ENCODE measurements at regions of chr1 and their contacts with region 1.

Region 1: GRCh38 chr1:84143796-84144565 is at the start of gene PRKACB:
- DNase-seq: peak in 8 of 35 experiments; percentile 11 to 75 (median 14)
- ATAC-seq: peak; percentile 88 to 97 (median 93)
- H3K4me3 ChIP-seq: peak within 1 kb of the TSS; percentile 57 to 69
- H3K4me3 Mint-ChIP-seq: peak within 1 kb of the TSS; percentile 93 to 97 (median 97)
- H3K27ac ChIP-seq: peak within 1 kb of the TSS; percentile 69
- H3K27ac Mint-ChIP-seq: peak within 1 kb of the TSS; percentile 99
- H3K4me1 ChIP-seq: peaks cover 6 to 41% of the 10 kb centered on the region in 2 experiments
- H3K4me1 Mint-ChIP-seq: peaks cover 33 to 53% (median 36%) of the 10 kb centered on the region in 3 donors
- H3K27me3 ChIP-seq: no peaks in the 10 kb centered on the region
- H3K27me3 Mint-ChIP-seq: no peaks in the 10 kb centered on the region
- total RNA-seq, gene PRKACB: 101 to 119 (median 109) TPM

Region 2: GRCh38 chr1:83909687-83910086 is 234.3 kb before region 1 on chr1:
- CTCF ChIA-PET with region 1: no interaction called
- POLR2A ChIA-PET with region 1: interaction called in 1 of 2 experiments, 11 read pairs
- DNase-seq: no peak
- ATAC-seq: no peak
- H3K4me3 ChIP-seq: no peak overlapping the region
- H3K4me3 Mint-ChIP-seq: no peak overlapping the region
- H3K27ac ChIP-seq: no peak overlapping the region
- H3K27ac Mint-ChIP-seq: no peak overlapping the region
- H3K4me1 ChIP-seq: no peaks in the 10 kb centered on the region
- H3K4me1 Mint-ChIP-seq: no peaks in the 10 kb centered on the region
- H3K27me3 ChIP-seq: peaks cover 0 to 4% of the 10 kb centered on the region in 2 experiments
- H3K27me3 Mint-ChIP-seq: peaks cover 21 to 23% of the 10 kb centered on the region in 2 donors

Region 3: DNA sequence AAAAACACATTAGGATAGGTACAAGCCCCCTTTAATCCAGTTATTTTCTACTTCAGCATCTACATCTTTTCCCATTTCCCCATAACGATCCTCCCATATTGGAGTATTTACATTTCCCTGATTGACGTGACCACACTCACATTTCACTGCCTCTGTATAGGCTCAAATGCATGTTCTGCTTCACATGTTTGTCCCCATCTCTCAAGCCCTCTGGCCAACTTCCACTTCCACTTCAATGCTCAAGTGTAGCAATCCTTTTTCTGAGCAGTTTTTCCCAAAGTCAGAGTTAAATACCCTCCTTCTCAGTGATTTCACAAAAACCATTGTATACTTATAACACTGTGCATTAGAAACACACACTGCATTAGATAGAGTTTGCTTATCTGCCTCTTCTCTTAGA is 83.2 kb before region 1 on chr1:
- CTCF ChIA-PET with region 1: no interaction called
- POLR2A ChIA-PET with region 1: no interaction called
- DNase-seq: no peak
- ATAC-seq: no peak
- H3K4me3 ChIP-seq: no peak overlapping the region
- H3K4me3 Mint-ChIP-seq: no peak overlapping the region
- H3K27ac ChIP-seq: no peak overlapping the region
- H3K27ac Mint-ChIP-seq: no peak overlapping the region
- H3K4me1 ChIP-seq: no peaks in the 10 kb centered on the region
- H3K4me1 Mint-ChIP-seq: no peaks in the 10 kb centered on the region
- H3K27me3 ChIP-seq: peaks cover 0 to 4% of the 10 kb centered on the region in 2 experiments
- H3K27me3 Mint-ChIP-seq: peaks cover 7 to 22% of the 10 kb centered on the region in 2 donors

Region 4: DNA sequence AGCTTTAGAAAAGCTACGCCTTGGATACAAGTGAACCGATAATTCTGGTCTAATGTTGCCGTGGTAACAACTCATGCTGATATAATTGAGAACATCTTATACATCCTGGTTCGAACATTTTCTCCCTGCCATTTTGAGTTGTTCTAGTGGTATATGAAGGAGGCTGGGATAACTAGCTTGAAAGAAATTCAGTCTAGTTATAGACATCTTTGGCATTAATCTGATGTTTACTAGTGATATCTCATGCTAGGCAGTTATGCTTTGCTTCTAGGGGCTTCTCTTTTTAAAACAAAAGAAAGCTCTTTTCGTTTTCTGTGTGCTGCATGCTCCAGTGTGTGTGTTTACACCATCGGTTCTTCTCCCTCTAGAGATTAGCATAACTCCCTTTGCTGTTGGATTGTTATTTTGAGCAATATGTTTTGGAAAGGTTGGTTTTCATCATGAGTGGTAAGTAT is 20.6 kb after region 1 on chr1:
- CTCF ChIA-PET with region 1: interaction called, 3 to 31 read pairs
- POLR2A ChIA-PET with region 1: interaction called, 4 to 6 read pairs
- DNase-seq: no peak
- ATAC-seq: peak in 1 of 4 experiments; percentile 26
- H3K4me3 ChIP-seq: peak overlapping the region in 1 of 2 donors; percentile 19
- H3K4me3 Mint-ChIP-seq: peak overlapping the region; percentile 25 to 67 (median 62)
- H3K27ac ChIP-seq: peak overlapping the region; percentile 52
- H3K27ac Mint-ChIP-seq: peak overlapping the region; percentile 46 to 58
- H3K4me1 ChIP-seq: peaks cover 10 to 50% of the 10 kb centered on the region in 2 experiments
- H3K4me1 Mint-ChIP-seq: peaks cover 85 to 94% (median 86%) of the 10 kb centered on the region in 3 donors
- H3K27me3 ChIP-seq: no peaks in the 10 kb centered on the region
- H3K27me3 Mint-ChIP-seq: no peaks in the 10 kb centered on the region

Region 5: DNA sequence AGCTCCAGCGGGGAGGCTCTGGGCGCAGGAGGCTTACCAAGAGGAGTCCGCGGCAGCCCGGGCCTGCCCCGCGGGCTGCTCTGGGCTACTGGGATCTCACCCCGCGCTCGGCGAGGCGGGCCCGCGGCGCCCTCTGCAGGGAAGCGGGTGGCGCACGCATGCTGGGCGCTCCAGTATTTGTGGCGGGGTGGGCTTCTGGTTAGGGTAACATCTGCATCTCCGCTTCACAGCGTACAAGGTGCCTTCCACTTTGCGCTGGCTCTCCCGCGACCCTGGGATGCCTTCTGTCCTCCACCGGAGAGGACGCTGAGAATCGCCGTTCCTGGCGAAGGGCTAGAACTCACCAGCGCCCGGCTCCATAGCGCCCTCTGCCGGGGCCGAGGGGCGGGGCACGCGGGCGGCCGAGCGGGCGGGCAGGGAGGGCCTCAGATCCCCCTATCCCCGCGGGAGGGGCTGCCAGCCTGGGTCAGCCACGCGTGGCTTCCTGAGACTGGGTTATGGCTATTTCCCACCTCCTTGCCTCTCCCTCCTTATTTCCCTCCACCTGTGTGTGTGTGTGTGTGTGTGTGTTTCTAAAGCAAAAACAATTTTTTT is 476.8 kb after region 1 on chr1:
- CTCF ChIA-PET with region 1: interaction called, 5 to 16 read pairs
- POLR2A ChIA-PET with region 1: no interaction called
- DNase-seq: peak; percentile 45 to 86 (median 70)
- ATAC-seq: peak; percentile 91 to 95 (median 92)
- H3K4me3 ChIP-seq: peak overlapping the region; percentile 65 to 69
- H3K4me3 Mint-ChIP-seq: peak overlapping the region; percentile 81 to 87 (median 86)
- H3K27ac ChIP-seq: no peak overlapping the region
- H3K27ac Mint-ChIP-seq: peak overlapping the region in 1 of 2 donors; percentile 87
- H3K4me1 ChIP-seq: peaks cover 0 to 9% of the 10 kb centered on the region in 2 experiments
- H3K4me1 Mint-ChIP-seq: peaks cover 0 to 7% (median 5%) of the 10 kb centered on the region in 3 donors
- H3K27me3 ChIP-seq: peaks cover 0 to 3% of the 10 kb centered on the region in 2 experiments
- H3K27me3 Mint-ChIP-seq: peaks cover 0 to 4% of the 10 kb centered on the region in 2 donors

Region 6: DNA sequence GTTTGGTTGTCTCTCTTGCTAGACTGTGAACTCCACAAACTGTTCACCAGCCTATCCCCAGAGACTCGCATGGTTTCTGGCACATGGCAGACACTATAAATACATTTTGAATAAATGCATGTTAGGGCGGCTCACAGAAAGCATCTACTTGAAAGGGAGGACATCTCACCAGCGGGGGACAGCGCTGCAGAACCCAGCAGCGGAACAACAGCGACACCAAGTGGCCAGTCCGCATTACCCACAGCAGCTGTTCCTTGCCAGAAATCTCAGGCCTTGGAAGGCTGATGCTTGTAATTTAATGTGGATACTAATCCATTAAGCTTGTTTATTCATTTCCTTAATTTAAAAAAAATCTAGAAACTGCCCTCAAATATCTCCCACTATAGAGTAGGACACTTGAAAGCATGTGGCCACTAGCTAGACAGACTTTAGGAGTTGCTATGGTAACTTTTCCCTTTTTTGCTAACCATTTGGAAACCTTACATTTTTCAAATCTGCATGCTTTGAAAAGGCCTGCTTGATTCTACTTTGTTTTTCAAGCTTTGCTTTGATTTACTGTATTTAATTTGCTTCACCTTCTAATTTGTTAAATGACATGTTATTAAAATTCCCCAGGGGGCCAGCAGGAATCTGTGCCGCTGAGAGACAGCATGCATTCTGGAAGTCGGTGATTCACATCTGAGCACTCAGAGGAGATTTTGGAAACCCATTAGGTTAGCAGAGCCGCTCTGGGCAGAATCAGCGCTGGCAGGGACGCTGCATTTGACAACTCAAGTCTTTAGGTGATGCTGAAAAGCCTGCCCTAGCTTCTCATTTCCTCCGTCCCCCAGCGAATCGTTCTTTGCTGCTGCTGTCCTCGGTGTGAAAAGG is 609.8 kb after region 1 on chr1:
- CTCF ChIA-PET with region 1: interaction called, 5 to 17 read pairs
- POLR2A ChIA-PET with region 1: no interaction called
- DNase-seq: peak; percentile 33 to 85 (median 63)
- ATAC-seq: peak; percentile 74 to 95 (median 92)
- H3K4me3 ChIP-seq: no peak overlapping the region
- H3K4me3 Mint-ChIP-seq: no peak overlapping the region
- H3K27ac ChIP-seq: no peak overlapping the region
- H3K27ac Mint-ChIP-seq: no peak overlapping the region
- H3K4me1 ChIP-seq: peaks cover 0 to 2% of the 10 kb centered on the region in 2 experiments
- H3K4me1 Mint-ChIP-seq: peaks cover 4 to 6% (median 4%) of the 10 kb centered on the region in 3 donors
- H3K27me3 ChIP-seq: peaks cover 0 to 9% of the 10 kb centered on the region in 2 experiments
- H3K27me3 Mint-ChIP-seq: peaks cover 11 to 13% of the 10 kb centered on the region in 2 donors

Measured in T-cell (primary cell).